Heart right ventricle (tissue), 16 donors: ENCODE measurements at regions of chr4 and their contacts with region 1.

Region 1: GRCh38 chr4:55706541-55706940 is 70.4 kb upstream of the NMU start:
- DNase-seq: no peak
- ATAC-seq: no peak
- H3K4me3 ChIP-seq: no peak overlapping the region
- H3K27ac ChIP-seq: no peak overlapping the region
- H3K4me1 ChIP-seq: no peaks in the 10 kb centered on the region
- H3K27me3 ChIP-seq: peaks cover 0 to 20% (median 0%) of the 10 kb centered on the region in 7 donors
- CTCF ChIP-seq: no peak

Region 2: GRCh38 chr4:55568905-55569504 is 137.5 kb before region 1 on chr4:
- intact Hi-C with region 1: no loop called
- DNase-seq: no peak
- ATAC-seq: no peak
- H3K4me3 ChIP-seq: no peak overlapping the region
- H3K27ac ChIP-seq: no peak overlapping the region
- H3K4me1 ChIP-seq: no peaks in the 10 kb centered on the region
- H3K27me3 ChIP-seq: no peaks in the 10 kb centered on the region
- CTCF ChIP-seq: no peak

Region 3: DNA sequence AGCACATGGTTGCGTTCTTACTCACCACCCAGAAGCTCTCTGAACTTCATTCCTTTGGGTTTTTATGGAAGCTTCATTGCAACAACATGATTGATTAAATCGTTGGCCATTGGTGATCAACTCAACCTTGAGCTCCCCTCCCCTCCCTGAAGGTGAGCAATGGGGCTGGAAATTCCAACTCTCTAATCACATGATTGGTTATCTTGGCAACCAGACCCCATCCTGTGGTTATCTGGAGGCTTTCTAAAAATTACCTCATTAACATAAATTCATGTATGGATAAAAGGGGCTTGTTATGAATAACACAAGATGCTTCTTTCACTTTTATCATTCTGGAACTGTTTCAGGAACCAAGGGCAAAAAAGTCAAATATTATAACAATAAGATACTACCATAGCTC is 35.8 kb before region 1 on chr4:
- intact Hi-C with region 1: no loop called
- DNase-seq: no peak
- ATAC-seq: no peak
- H3K4me3 ChIP-seq: no peak overlapping the region
- H3K27ac ChIP-seq: no peak overlapping the region
- H3K4me1 ChIP-seq: no peaks in the 10 kb centered on the region
- H3K27me3 ChIP-seq: peaks cover 0 to 13% (median 3%) of the 10 kb centered on the region in 7 donors
- CTCF ChIP-seq: no peak

Region 4: DNA sequence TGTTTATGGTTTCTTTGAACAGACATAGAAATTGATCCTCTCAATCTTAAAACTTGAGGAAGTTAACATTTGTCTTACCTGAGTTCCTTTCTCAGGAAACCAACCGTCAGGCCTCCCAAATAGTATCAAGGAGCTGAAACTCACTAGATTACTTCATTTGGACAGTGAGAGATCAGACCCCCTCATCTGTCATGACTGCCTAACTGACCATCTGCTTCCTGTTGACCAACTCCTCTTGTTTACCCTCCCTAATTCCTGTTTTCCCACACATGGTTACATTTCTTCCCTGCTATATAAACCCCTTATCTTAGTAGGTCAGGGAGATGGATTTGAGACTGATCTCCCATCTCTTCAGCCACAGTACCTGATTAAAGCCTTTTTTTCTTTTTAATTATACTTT is 24.2 kb before region 1 on chr4:
- intact Hi-C with region 1: no loop called
- DNase-seq: no peak
- ATAC-seq: no peak
- H3K4me3 ChIP-seq: no peak overlapping the region
- H3K27ac ChIP-seq: no peak overlapping the region
- H3K4me1 ChIP-seq: no peaks in the 10 kb centered on the region
- H3K27me3 ChIP-seq: no peaks in the 10 kb centered on the region
- CTCF ChIP-seq: no peak

Region 5: GRCh38 chr4:55727746-55728145 is 21.2 kb after region 1 on chr4:
- intact Hi-C with region 1: loop called in 1 of 10 experiments (anchors 2 kb)
- DNase-seq: no peak
- ATAC-seq: no peak
- H3K4me3 ChIP-seq: no peak overlapping the region
- H3K27ac ChIP-seq: no peak overlapping the region
- H3K4me1 ChIP-seq: no peaks in the 10 kb centered on the region
- H3K27me3 ChIP-seq: peaks cover 0 to 23% (median 5%) of the 10 kb centered on the region in 7 donors
- CTCF ChIP-seq: no peak